ENCODE measurements at regions of chr12 and their contacts with region 1.

Region 1: DNA sequence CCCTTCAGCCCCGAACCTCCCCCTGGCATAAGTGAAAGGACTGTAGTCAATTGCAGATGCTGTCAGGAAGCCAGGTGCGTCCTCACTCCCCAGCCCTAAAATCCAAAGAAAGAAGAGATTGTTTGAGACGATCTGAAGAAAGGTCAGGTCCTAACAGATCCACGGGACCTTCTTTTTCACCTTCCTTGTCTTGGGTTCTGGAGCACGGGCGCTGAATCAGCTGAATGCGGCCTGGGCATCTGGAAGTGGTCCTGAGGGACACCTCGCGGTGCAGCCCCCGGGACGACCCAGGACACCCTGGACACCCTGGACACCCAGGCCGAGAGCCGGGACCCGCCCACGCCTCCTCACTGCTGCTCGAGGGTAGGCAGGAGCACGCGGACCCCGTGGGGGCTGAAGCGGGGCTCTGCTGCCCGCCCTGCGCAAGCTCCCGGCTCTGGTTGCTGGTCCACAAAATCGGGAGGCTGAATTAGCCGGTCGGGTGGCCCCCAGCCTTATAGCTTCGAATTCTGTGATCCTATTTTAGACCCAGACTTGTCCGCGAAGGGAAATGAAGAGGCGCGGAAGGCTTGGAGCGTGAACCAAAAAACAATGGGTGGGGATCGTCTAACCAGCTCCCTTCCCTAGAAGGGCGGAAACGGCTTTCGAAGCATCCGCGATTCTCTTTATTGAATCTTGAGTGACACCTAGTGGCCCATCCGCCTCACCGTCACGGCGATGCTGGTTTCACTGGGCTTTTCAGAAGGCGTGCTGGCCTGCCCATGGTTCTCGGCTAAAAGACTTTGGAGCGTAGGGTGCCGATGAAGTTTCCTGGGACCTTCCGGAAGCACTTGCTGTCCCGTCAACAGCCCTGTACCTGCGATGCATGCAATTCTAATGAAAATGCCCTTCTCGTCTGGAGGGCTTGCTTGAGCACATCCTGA is 46.4 kb upstream of the PLXNC1 start:
- DNase-seq: no peak
- H3K4me3 ChIP-seq: peak overlapping the region; percentile 68
- CTCF ChIP-seq: peak; percentile 86

Region 2: DNA sequence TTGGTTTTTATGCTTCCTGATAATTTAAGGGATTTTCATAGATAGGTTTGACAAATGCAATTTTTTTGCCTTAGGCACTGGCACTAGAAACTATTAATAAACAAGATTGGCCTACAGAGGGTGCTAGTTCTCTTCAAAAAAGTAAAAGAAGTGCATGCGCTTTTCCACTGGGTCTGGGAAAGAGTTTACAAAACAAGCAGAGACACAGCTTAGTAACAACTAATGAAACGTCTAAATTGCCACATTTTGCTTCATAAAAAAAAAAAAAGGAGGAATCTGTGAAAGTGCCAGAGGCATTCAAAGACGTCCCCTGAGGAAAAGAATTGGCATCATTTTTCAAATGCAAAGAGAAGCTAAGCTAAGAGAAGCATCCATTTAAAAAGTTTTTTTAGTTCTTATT is 1114.6 kb before region 1 on chr12:
- CTCF ChIA-PET with region 1: interaction called, 12 read pairs
- POLR2A ChIA-PET with region 1: no interaction called
- DNase-seq: peak; percentile 29
- H3K4me3 ChIP-seq: no peak overlapping the region
- CTCF ChIP-seq: no peak

Region 3: GRCh38 chr12:93502802-93503623 is 599.0 kb before region 1 on chr12:
- CTCF ChIA-PET with region 1: interaction called, 360 read pairs
- POLR2A ChIA-PET with region 1: interaction called, 5 read pairs
- DNase-seq: no peak
- H3K4me3 ChIP-seq: no peak overlapping the region
- CTCF ChIP-seq: peak; percentile 55

Region 4: GRCh38 chr12:93712200-93712599 is 389.8 kb before region 1 on chr12:
- CTCF ChIA-PET with region 1: interaction called, 14 read pairs
- POLR2A ChIA-PET with region 1: no interaction called
- DNase-seq: no peak
- H3K4me3 ChIP-seq: no peak overlapping the region
- CTCF ChIP-seq: no peak

Region 5: GRCh38 chr12:93790472-93791152 is 311.4 kb before region 1 on chr12:
- CTCF ChIA-PET with region 1: interaction called, 27 read pairs
- POLR2A ChIA-PET with region 1: interaction called, 6 read pairs
- DNase-seq: peak; percentile 61
- H3K4me3 ChIP-seq: no peak overlapping the region
- CTCF ChIP-seq: no peak

Region 6: GRCh38 chr12:93954166-93955112 is 147.6 kb before region 1 on chr12:
- CTCF ChIA-PET with region 1: interaction called, 13 read pairs
- POLR2A ChIA-PET with region 1: no interaction called
- DNase-seq: no peak
- H3K4me3 ChIP-seq: no peak overlapping the region
- CTCF ChIP-seq: no peak

Region 7: GRCh38 chr12:94112132-94112531 is 10.1 kb after region 1 on chr12:
- CTCF ChIA-PET with region 1: interaction called, 21 read pairs
- POLR2A ChIA-PET with region 1: no interaction called
- DNase-seq: no peak
- H3K4me3 ChIP-seq: no peak overlapping the region
- CTCF ChIP-seq: no peak